CD4-positive, alpha-beta T cell (primary cell): ENCODE measurements at regions of chr14 and their contacts with region 1.

Region 1: DNA sequence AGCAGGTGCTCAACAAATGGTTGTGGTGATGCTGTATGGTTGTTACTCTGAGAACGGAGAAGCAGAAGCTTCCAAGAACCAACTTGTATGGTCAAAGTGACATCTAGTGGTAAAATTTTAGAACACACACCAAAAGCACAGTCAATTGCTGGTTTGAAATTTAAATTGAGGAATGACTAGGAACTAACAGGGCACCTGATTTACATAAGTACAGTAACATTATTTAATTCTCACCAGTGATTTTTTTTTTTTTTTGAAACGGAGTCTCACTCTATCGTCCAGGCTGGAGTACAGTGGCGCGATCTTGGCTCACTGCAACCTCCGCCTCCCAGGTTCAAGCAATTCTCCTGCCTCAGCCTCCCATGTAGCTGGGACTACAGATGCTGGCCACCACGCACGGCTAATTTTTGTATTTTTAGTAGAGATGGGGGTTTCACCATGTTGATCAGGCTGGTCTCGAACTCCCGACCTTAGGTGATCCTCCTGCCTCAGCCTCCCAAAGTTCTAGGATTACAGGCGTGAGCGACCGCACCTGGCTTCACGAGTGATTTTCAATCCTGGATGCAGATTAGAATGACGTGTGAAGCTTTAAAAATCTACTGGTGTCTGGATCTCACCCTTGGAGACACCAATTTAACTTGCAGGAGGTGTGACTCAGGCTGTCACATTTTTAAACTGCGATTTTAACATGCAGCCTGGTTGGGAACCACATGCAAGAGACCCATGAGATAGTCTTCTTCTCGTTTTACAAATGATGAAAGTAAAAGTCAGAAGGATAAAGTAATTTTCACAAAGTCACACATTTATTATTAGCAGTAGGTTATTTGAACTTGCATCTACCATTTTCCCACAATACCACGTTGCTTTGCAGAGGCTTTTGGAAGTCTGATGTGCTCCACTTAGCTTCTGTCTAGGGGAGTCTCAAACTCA is 14.1 kb upstream of the NUMB start:
- DNase-seq: peak in 3 of 14 experiments; percentile 72 to 79 (median 76)
- ATAC-seq: peak; percentile 87
- H3K4me3 ChIP-seq: no peak overlapping the region
- H3K4me3 Mint-ChIP-seq: no peak overlapping the region
- H3K27ac ChIP-seq: no peak overlapping the region
- H3K27ac Mint-ChIP-seq: no peak overlapping the region
- H3K4me1 ChIP-seq: peaks cover 6% of the 10 kb centered on the region
- H3K4me1 Mint-ChIP-seq: peaks cover 4% of the 10 kb centered on the region
- H3K27me3 ChIP-seq: no peaks in the 10 kb centered on the region
- H3K27me3 Mint-ChIP-seq: no peaks in the 10 kb centered on the region
- CTCF ChIP-seq: peak; percentile 75

Region 2: GRCh38 chr14:72516936-72517700 is 955.3 kb before region 1 on chr14:
- CTCF ChIA-PET with region 1: no interaction called
- POLR2A ChIA-PET with region 1: no interaction called
- intact Hi-C with region 1: loop called in 1 of 2 experiments (anchors 5 kb)
- DNase-seq: peak; percentile 48 to 85 (median 66)
- ATAC-seq: peak; percentile 66
- H3K4me3 ChIP-seq: no peak overlapping the region
- H3K4me3 Mint-ChIP-seq: peak overlapping the region; percentile 32
- H3K27ac ChIP-seq: no peak overlapping the region
- H3K27ac Mint-ChIP-seq: peak overlapping the region; percentile 15
- H3K4me1 ChIP-seq: peaks cover 35% of the 10 kb centered on the region
- H3K4me1 Mint-ChIP-seq: peaks cover 52% of the 10 kb centered on the region
- H3K27me3 ChIP-seq: no peaks in the 10 kb centered on the region
- H3K27me3 Mint-ChIP-seq: no peaks in the 10 kb centered on the region
- CTCF ChIP-seq: peak; percentile 81

Region 3: DNA sequence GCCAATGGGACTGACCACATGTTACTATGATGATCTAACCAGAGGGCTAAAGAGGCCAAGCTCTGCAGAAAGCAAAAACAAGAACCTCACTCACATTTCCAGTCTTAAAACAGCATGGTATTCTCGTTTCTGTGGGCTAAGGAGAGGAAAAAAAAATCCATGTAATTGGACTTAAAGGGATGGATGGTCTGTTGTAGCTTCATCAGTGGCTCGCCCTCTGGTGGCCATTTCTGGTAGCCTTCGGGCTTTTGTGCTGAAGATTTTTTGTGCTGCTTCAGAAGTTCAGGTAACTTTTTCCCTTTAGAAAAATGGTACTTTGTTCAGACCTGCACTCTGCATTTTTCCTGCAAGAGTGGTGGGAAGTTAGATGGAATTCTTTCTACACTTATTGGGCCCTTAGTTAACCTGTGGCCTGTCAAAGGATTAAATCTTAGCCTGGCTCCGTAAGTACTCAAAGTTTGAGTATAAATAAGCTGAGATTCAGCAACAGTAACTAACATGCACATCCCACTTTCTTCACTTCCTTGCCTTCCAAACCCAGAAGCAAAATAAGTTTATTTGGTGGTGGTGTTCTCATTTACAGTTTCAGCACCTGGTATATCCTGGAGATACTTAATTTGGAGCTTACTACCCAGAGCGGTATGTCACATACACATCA is 523.8 kb before region 1 on chr14:
- CTCF ChIA-PET with region 1: no interaction called
- POLR2A ChIA-PET with region 1: no interaction called
- intact Hi-C with region 1: loop called in 1 of 2 experiments (anchors 2 kb)
- DNase-seq: peak; percentile 42 to 73 (median 53)
- ATAC-seq: peak; percentile 60
- H3K4me3 ChIP-seq: no peak overlapping the region
- H3K4me3 Mint-ChIP-seq: no peak overlapping the region
- H3K27ac ChIP-seq: no peak overlapping the region
- H3K27ac Mint-ChIP-seq: no peak overlapping the region
- H3K4me1 ChIP-seq: no peaks in the 10 kb centered on the region
- H3K4me1 Mint-ChIP-seq: no peaks in the 10 kb centered on the region
- H3K27me3 ChIP-seq: no peaks in the 10 kb centered on the region
- H3K27me3 Mint-ChIP-seq: no peaks in the 10 kb centered on the region
- CTCF ChIP-seq: peak; percentile 89

Region 4: DNA sequence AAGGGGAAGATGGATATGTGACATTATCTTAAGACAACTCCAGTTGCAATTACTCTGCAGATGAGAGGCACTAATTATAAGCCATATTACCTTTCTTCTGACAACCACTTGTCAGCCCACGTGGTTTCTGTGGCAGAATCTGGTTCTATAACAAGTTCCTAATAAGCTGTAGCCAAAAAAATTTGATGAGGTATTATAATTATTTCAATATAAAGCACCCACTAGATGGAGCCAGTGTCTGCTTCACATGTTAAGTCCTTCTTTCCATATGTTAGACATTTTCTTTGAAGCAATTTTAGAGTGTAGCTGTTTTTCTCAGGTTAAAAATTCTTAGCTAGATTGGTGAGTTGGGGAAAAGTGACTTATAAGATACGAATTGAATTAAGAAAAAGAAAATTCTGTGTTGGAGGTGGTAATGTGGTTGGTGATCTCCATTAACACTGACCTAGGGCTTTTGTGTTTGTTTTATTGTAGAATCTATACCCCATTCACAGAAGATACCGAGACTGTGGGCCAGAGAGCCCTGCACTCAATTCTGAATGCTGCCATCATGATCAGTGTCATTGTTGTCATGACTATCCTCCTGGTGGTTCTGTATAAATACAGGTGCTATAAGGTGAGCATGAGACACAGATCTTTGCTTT is 299.2 kb before region 1 on chr14:
- CTCF ChIA-PET with region 1: interaction called, 7 read pairs
- POLR2A ChIA-PET with region 1: no interaction called
- intact Hi-C with region 1: loop called (anchors 1 kb)
- DNase-seq: peak in 3 of 14 experiments; percentile 37 to 54 (median 47)
- ATAC-seq: peak; percentile 54
- H3K4me3 ChIP-seq: no peak overlapping the region
- H3K4me3 Mint-ChIP-seq: no peak overlapping the region
- H3K27ac ChIP-seq: no peak overlapping the region
- H3K27ac Mint-ChIP-seq: no peak overlapping the region
- H3K4me1 ChIP-seq: no peaks in the 10 kb centered on the region
- H3K4me1 Mint-ChIP-seq: no peaks in the 10 kb centered on the region
- H3K27me3 ChIP-seq: no peaks in the 10 kb centered on the region
- H3K27me3 Mint-ChIP-seq: no peaks in the 10 kb centered on the region
- CTCF ChIP-seq: peak; percentile 38

Region 5: GRCh38 chr14:73295198-73295796 is 177.2 kb before region 1 on chr14:
- CTCF ChIA-PET with region 1: interaction called, 47 read pairs
- POLR2A ChIA-PET with region 1: interaction called, 13 read pairs
- intact Hi-C with region 1: loop called (anchors 1 kb)
- DNase-seq: peak in 4 of 14 experiments; percentile 21 to 64 (median 55)
- ATAC-seq: peak; percentile 48
- H3K4me3 ChIP-seq: no peak overlapping the region
- H3K4me3 Mint-ChIP-seq: no peak overlapping the region
- H3K27ac ChIP-seq: no peak overlapping the region
- H3K27ac Mint-ChIP-seq: no peak overlapping the region
- H3K4me1 ChIP-seq: no peaks in the 10 kb centered on the region
- H3K4me1 Mint-ChIP-seq: no peaks in the 10 kb centered on the region
- H3K27me3 ChIP-seq: no peaks in the 10 kb centered on the region
- H3K27me3 Mint-ChIP-seq: no peaks in the 10 kb centered on the region
- CTCF ChIP-seq: peak; percentile 78